ENCODE measurements at regions of chr17 and their contacts with region 1.

Region 1: DNA sequence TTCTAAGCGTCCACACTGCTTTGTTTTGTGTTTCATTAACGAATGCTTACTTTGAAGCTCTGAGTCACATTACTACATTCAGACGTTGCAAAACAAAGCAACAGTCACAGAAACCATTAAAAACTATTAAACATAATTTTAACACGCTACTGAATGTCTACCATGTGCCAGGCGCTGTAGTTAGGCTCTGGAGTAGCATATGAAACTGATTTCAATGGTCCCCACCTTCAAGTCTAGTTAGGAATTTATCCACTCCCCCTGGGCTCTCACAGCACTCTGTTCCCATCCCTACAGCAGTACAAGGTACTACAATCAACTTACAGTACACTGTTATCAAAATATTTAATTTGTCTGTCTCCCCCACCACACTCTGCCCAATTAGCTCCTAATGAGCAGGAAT is 631 bp downstream of the UTP6 start:
- DNase-seq: peak in 1 of 9 donors; percentile 9
- ATAC-seq: no peak
- H3K4me3 ChIP-seq: peak overlapping the region; percentile 80
- H3K4me3 Mint-ChIP-seq: no peak overlapping the region
- H3K27ac ChIP-seq: peak overlapping the region; percentile 81
- H3K27ac Mint-ChIP-seq: no peak overlapping the region
- H3K4me1 ChIP-seq: peaks cover 0 to 10% of the 10 kb centered on the region in 2 donors
- H3K4me1 Mint-ChIP-seq: peaks cover 0 to 25% (median 9%) of the 10 kb centered on the region in 7 donors
- H3K27me3 ChIP-seq: no peaks in the 10 kb centered on the region
- H3K27me3 Mint-ChIP-seq: no peaks in the 10 kb centered on the region

Region 2: DNA sequence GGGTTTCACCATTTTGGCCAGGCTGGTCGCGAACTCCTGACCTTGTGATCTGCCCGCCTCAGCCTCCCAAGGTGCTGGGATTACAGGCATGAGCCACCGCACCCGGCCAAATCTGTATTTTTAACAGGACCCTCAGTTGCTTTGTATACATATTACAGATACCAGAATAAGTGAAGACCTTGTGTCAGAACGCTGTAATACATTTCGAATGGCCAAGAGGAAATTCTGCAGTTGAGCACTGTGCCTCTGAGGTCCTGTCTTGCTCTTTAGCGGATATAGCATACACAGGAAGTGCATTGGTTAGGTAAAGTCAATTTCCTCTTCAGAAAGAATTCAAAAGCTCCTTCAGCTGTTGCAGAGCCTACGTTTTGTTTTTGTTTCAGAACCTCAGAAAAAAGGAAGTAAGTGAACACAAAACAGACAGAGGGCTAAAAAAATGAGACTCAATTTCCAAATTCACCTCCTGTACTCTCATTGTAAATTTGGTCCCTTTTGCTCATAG is 1092.0 kb before region 1 on chr17:
- CTCF ChIA-PET with region 1: no interaction called
- POLR2A ChIA-PET with region 1: no interaction called
- intact Hi-C with region 1: loop called in 1 of 2 experiments (anchors 5 kb)
- DNase-seq: peak in 7 of 9 donors; percentile 69 to 89 (median 83)
- ATAC-seq: peak; percentile 95
- H3K4me3 ChIP-seq: peak overlapping the region; percentile 38
- H3K4me3 Mint-ChIP-seq: peak overlapping the region; percentile 84 to 94 (median 88)
- H3K27ac ChIP-seq: peak overlapping the region; percentile 81
- H3K27ac Mint-ChIP-seq: peak overlapping the region; percentile 96 to 99 (median 97)
- H3K4me1 ChIP-seq: peaks cover 41 to 63% of the 10 kb centered on the region in 2 donors
- H3K4me1 Mint-ChIP-seq: peaks cover 52 to 84% (median 72%) of the 10 kb centered on the region in 7 donors
- H3K27me3 ChIP-seq: no peaks in the 10 kb centered on the region
- H3K27me3 Mint-ChIP-seq: no peaks in the 10 kb centered on the region

Region 3: GRCh38 chr17:31549525-31550388 is 351.1 kb before region 1 on chr17:
- CTCF ChIA-PET with region 1: no interaction called
- POLR2A ChIA-PET with region 1: no interaction called
- intact Hi-C with region 1: loop called (anchors 1 to 5 kb)
- DNase-seq: peak; percentile 75 to 98 (median 85)
- ATAC-seq: peak; percentile 93
- H3K4me3 ChIP-seq: peak overlapping the region; percentile 77
- H3K4me3 Mint-ChIP-seq: peak overlapping the region; percentile 84 to 94 (median 92)
- H3K27ac ChIP-seq: peak overlapping the region; percentile 75
- H3K27ac Mint-ChIP-seq: peak overlapping the region; percentile 71 to 93 (median 84)
- H3K4me1 ChIP-seq: peaks cover 0 to 8% of the 10 kb centered on the region in 2 donors
- H3K4me1 Mint-ChIP-seq: peaks cover 8 to 25% (median 18%) of the 10 kb centered on the region in 7 donors
- H3K27me3 ChIP-seq: no peaks in the 10 kb centered on the region
- H3K27me3 Mint-ChIP-seq: peaks cover 0 to 24% (median 0%) of the 10 kb centered on the region in 5 donors

Region 4: DNA sequence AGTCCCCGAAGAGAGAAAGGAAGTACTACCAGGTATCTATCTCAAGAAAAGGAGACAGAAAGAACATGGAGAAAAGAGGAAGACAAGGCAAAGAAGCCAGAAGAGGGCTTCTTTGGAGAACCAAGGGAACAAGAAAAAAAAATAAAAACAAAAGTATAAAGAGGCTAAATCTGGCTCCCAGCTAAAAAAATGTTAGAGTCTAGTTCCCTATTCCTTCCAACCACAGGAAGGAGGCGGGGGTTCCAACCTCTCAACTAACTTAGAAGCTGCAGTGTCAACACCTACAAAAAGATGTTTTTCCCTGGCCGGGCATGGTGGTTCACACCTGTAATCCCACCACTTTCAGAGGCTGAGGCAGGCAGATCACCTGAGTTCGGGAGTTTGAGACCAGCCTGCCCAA is 12.8 kb before region 1 on chr17:
- CTCF ChIA-PET with region 1: no interaction called
- POLR2A ChIA-PET with region 1: no interaction called
- intact Hi-C with region 1: no loop called
- DNase-seq: no peak
- ATAC-seq: peak; percentile 44
- H3K4me3 ChIP-seq: no peak overlapping the region
- H3K4me3 Mint-ChIP-seq: no peak overlapping the region
- H3K27ac ChIP-seq: no peak overlapping the region
- H3K27ac Mint-ChIP-seq: peak overlapping the region in 2 of 9 donors; percentile 10 to 38
- H3K4me1 ChIP-seq: no peaks in the 10 kb centered on the region
- H3K4me1 Mint-ChIP-seq: peaks cover 0 to 5% (median 0%) of the 10 kb centered on the region in 7 donors
- H3K27me3 ChIP-seq: no peaks in the 10 kb centered on the region
- H3K27me3 Mint-ChIP-seq: no peaks in the 10 kb centered on the region

Region 5: GRCh38 chr17:31931756-31932155 is 30.9 kb after region 1 on chr17:
- CTCF ChIA-PET with region 1: no interaction called
- POLR2A ChIA-PET with region 1: interaction called, 10 read pairs
- intact Hi-C with region 1: no loop called
- DNase-seq: no peak
- ATAC-seq: no peak
- H3K4me3 ChIP-seq: no peak overlapping the region
- H3K4me3 Mint-ChIP-seq: no peak overlapping the region
- H3K27ac ChIP-seq: no peak overlapping the region
- H3K27ac Mint-ChIP-seq: no peak overlapping the region
- H3K4me1 ChIP-seq: peaks cover 0 to 5% of the 10 kb centered on the region in 2 donors
- H3K4me1 Mint-ChIP-seq: peaks cover 0 to 8% (median 3%) of the 10 kb centered on the region in 7 donors
- H3K27me3 ChIP-seq: no peaks in the 10 kb centered on the region
- H3K27me3 Mint-ChIP-seq: no peaks in the 10 kb centered on the region

Region 6: GRCh38 chr17:32142038-32142856 is 241.4 kb after region 1 on chr17 and contains the start of gene RHOT1:
- CTCF ChIA-PET with region 1: no interaction called
- POLR2A ChIA-PET with region 1: no interaction called
- intact Hi-C with region 1: loop called (anchors 1 kb)
- DNase-seq: peak; percentile 55 to 84 (median 75)
- ATAC-seq: peak; percentile 90
- H3K4me3 ChIP-seq: peak within 1 kb of the TSS; percentile 91
- H3K4me3 Mint-ChIP-seq: peak within 1 kb of the TSS; percentile 92 to 100 (median 96)
- H3K27ac ChIP-seq: peak within 1 kb of the TSS; percentile 85
- H3K27ac Mint-ChIP-seq: peak within 1 kb of the TSS; percentile 77 to 93 (median 91)
- H3K4me1 ChIP-seq: peaks cover 5 to 15% of the 10 kb centered on the region in 2 donors
- H3K4me1 Mint-ChIP-seq: peaks cover 5 to 43% (median 39%) of the 10 kb centered on the region in 7 donors
- H3K27me3 ChIP-seq: no peaks in the 10 kb centered on the region
- H3K27me3 Mint-ChIP-seq: peaks cover 0 to 4% (median 0%) of the 10 kb centered on the region in 5 donors
- total RNA-seq, gene RHOT1: 24.3 to 31.7 (median 29.3) TPM

Measured in naive thymus-derived CD4-positive, alpha-beta T cell (primary cell).